Aorta (tissue), 5 donors: ENCODE measurements at regions of chr2 and their contacts with region 1.

Region 1: DNA sequence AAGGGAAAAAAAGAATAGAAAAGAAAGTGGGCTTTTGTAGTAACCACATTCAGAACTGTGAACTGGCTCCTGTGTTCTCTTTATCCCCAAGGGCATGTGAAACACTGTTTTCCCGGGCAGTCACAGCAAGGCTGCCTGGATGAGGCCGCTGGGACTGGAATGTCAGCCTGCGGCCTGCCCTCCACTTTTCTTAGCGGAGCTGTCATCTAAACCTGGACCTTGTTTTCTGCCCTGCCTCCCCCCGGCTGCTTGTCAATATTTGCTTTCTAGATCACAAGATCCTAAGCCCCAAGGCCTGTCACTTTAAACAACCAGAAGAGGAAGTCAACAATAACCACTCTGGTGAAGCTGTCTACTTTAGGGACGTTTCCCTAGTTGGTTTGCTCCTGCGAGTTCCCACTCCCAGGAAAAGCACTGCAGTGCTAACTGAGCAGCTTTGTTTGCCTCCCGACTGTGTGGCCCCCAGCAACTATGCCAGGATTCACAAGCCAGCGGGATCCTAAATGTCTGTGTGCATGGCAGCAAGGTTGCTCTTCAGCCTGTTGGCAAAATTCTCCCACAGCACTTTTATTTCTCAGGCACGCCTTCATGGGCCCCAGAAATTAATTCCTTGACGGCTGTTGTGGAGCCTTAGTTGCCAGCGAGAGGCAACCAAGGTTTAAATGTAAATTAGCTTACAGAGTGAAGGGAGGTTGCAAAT is 30.6 kb downstream of the SOWAHC start:
- DNase-seq: no peak
- ATAC-seq: peak; percentile 62
- H3K4me3 ChIP-seq: no peak overlapping the region
- H3K27ac ChIP-seq: peak overlapping the region; percentile 46 to 96
- H3K4me1 ChIP-seq: no peaks in the 10 kb centered on the region
- H3K27me3 ChIP-seq: no peaks in the 10 kb centered on the region

Region 2: DNA sequence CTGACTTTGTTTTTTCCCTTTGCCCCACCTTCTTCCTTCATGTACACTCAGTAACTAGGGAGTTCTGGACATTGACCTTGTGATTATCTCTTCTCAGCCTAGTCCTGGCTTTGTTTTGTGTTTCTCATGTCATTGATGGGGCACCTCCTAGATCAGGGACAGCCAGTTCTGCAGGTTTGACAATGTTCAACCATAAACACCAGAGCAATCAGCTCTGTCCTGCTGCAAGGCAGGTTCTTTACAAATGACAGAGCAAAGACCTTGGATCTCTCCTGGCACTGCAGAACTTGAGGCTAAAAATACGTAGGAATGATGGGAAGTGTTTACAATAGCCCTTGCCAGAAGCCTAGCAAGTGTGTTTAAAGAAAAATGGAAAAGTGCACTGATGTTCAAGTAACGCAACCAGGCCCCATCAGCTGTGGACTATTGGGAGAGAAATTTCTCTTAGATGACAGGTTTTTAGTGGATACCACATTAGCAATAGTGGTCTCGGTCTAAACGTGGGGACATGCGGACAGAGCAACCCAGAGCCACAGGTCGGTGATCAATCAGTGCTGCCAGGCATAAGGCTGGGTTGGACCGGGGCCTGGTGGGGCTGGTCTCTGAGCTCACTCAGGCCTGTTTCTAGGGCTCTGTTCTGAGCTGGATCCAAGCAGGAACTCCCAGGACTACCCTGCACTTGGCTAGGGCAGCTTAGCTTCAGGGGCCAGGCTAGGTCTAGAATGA is 46.3 kb after region 1 on chr2:
- intact Hi-C with region 1: loop called (anchors 2 to 5 kb)
- DNase-seq: peak; percentile 83 to 87
- ATAC-seq: peak; percentile 89
- H3K4me3 ChIP-seq: no peak overlapping the region
- H3K27ac ChIP-seq: peak overlapping the region; percentile 44 to 94
- H3K4me1 ChIP-seq: peaks cover 5 to 6% of the 10 kb centered on the region in 2 donors
- H3K27me3 ChIP-seq: no peaks in the 10 kb centered on the region

Region 3: DNA sequence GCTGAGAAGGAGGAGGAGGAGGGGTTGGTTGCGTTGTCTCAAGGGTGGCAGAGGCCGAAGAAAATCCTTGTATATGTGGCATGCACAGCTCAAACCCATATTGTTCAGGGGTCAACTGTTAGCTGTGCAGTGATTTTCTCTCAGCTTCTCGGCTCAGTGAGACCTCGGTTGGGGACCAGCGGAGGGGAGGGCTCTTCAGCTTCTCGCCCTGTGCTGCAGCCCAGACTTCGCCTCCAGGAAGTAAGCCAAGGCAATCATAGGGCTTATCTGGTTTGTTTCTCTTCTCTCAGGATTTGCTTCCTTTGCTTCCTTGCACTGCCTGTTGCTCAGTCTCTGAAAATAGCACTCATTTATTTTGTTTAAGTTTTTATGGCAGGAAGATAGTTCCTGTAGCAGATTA is 54.9 kb after region 1 on chr2:
- intact Hi-C with region 1: loop called in 1 of 2 experiments (anchors 5 kb)
- DNase-seq: peak; percentile 50 to 62
- ATAC-seq: peak; percentile 71
- H3K4me3 ChIP-seq: no peak overlapping the region
- H3K27ac ChIP-seq: peak overlapping the region; percentile 77 to 85
- H3K4me1 ChIP-seq: no peaks in the 10 kb centered on the region
- H3K27me3 ChIP-seq: no peaks in the 10 kb centered on the region

Region 4: GRCh38 chr2:109711230-109712122 is 66.8 kb after region 1 on chr2:
- intact Hi-C with region 1: no loop called
- DNase-seq: no peak
- ATAC-seq: no peak
- H3K4me3 ChIP-seq: no peak overlapping the region
- H3K27ac ChIP-seq: no peak overlapping the region
- H3K4me1 ChIP-seq: no peaks in the 10 kb centered on the region
- H3K27me3 ChIP-seq: no peaks in the 10 kb centered on the region